Activated T-helper 2 cell treated with anti-CD3 and anti-CD28 coated beads, Interferon-gamma antibody, Interleukin-2, Interleukin-4, amounts not matched to agents 10 μg/mL and 5 μg/mL and 100 μg/mL, durations not matched to agents 14 hours and 24 hours and 36 hours (primary cell): ENCODE measurements at regions of chr3 and their contacts with region 1.

Region 1: GRCh38 chr3:133448478-133449122 is 48.7 kb downstream of the BFSP2 start:
- DNase-seq: peak; percentile 34
- H3K4me3 Mint-ChIP-seq: peak overlapping the region; percentile 39
- H3K27ac Mint-ChIP-seq: peak overlapping the region; percentile 76
- H3K4me1 Mint-ChIP-seq: peaks cover 35% of the 10 kb centered on the region
- H3K27me3 Mint-ChIP-seq: no peaks in the 10 kb centered on the region

Region 2: DNA sequence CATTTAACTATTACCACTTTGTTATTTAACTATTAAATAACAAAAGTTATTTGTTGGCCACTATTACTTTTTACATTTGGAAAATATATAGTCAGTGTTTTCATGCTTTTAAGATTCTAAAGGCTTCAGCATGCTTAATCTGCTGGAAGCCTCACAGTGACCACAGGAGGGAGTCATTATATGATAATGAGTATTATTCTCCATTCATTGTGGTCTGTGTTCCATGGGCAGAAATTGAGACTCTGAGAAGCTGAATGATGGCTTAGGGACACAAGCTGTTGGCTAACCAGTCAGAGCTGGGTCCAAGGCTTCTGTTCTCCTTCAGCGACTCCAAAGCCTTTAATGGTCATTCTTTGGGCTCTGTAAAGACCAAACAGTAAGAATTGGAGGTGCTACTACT is 16.0 kb after region 1 on chr3:
- intact Hi-C with region 1: loop called (anchors 1 kb)
- DNase-seq: no peak
- H3K4me3 Mint-ChIP-seq: no peak overlapping the region
- H3K27ac Mint-ChIP-seq: no peak overlapping the region
- H3K4me1 Mint-ChIP-seq: peaks cover 49% of the 10 kb centered on the region
- H3K27me3 Mint-ChIP-seq: no peaks in the 10 kb centered on the region

Region 3: DNA sequence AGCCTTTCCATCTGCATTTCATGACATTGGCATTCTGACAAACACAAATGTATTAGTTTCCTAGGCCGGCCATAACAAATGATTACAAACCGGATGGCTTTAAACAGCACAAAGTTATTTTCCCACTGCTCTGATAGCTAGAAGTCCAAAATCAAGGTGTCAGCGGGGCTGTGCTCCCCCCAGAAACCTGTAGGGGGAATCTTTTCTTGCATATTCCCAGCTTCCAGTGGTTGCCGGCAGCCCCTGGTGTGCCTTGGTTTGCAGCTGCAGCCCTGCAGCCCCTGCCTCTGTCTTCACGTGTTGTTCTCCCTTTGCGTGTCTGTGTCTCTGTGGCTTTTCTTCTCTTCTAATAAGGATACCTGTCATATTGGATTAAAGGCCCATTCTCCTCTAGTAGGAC is 45.9 kb after region 1 on chr3:
- intact Hi-C with region 1: loop called (anchors 1 kb)
- DNase-seq: no peak
- H3K4me3 Mint-ChIP-seq: no peak overlapping the region
- H3K27ac Mint-ChIP-seq: no peak overlapping the region
- H3K4me1 Mint-ChIP-seq: peaks cover 49% of the 10 kb centered on the region
- H3K27me3 Mint-ChIP-seq: no peaks in the 10 kb centered on the region

Region 4: DNA sequence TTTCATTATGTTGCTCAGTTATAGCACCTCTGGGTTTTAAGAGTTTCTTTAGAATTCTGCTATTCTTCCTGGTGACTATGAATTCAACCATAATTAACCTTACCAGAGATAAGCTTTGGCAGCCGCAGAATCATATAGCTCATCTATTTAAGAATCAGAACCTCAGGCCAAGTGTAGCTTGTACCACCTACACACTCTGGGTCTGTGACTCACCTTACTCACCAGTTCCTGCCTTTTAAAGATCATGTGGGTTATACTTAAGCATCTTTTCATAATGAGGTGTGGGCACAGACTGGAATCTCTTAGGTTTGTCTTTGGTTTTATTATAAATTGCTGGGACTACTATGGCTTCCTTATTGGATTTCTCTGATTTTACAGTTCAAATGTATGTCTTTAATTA is 146.7 kb after region 1 on chr3:
- intact Hi-C with region 1: loop called (anchors 1 kb)
- DNase-seq: no peak
- H3K4me3 Mint-ChIP-seq: no peak overlapping the region
- H3K27ac Mint-ChIP-seq: peak overlapping the region; percentile 79
- H3K4me1 Mint-ChIP-seq: peaks cover 28% of the 10 kb centered on the region
- H3K27me3 Mint-ChIP-seq: no peaks in the 10 kb centered on the region

Region 5: GRCh38 chr3:133805527-133806475 is 357.2 kb after region 1 on chr3 and contains the start of gene SRPRB:
- intact Hi-C with region 1: loop called (anchors 5 kb)
- DNase-seq: peak; percentile 94
- H3K4me3 Mint-ChIP-seq: peak within 1 kb of the TSS; percentile 94
- H3K27ac Mint-ChIP-seq: peak within 1 kb of the TSS; percentile 90
- H3K4me1 Mint-ChIP-seq: peaks cover 17% of the 10 kb centered on the region
- H3K27me3 Mint-ChIP-seq: peaks cover 9% of the 10 kb centered on the region
- total RNA-seq, gene SRPRB: 91.5 and 92.1 TPM in 2 replicates